ENCODE measurements at regions of chr9 and their contacts with region 1.

Region 1: DNA sequence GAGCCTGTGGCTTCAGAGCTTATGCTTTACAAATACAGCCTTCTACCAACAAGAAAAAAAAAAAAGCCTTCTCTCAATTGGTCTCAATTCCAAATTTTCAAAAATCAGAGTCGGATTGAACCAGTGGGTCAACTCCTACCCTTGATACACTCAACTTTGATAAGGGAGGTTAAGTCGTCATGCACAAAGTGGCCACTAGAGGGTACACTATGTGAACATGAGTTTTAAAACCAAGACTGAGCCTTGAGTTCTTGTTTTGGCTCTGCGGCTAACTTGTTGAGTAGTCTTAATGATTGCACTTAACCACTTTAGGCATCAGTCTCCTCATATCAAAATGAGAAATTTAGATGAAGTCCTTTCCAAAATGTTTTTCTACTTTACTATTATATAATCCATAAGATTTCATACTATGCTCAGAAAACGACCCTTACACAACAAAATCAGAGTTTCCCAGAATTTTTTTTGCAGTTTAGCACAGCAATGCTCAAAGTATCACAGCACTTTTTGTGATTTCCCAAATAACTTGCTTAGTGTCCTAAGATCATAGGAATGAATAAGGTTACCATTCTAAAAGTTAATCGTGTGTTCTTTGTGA is 92.9 kb upstream of the MTAP start:
- DNase-seq: peak; percentile 44 to 57 (median 50)
- H3K4me3 ChIP-seq: no peak overlapping the region
- H3K4me3 Mint-ChIP-seq: no peak overlapping the region
- H3K27ac ChIP-seq: no peak overlapping the region
- H3K27ac Mint-ChIP-seq: peak overlapping the region in 1 of 7 donors; percentile 43
- H3K4me1 ChIP-seq: no peaks in the 10 kb centered on the region
- H3K4me1 Mint-ChIP-seq: peaks cover 0 to 8% (median 5%) of the 10 kb centered on the region in 4 donors
- H3K27me3 ChIP-seq: peaks cover 4% of the 10 kb centered on the region
- H3K27me3 Mint-ChIP-seq: peaks cover 1 to 3% of the 10 kb centered on the region in 2 donors

Region 2: GRCh38 chr9:21326526-21327139 is 382.9 kb before region 1 on chr9:
- CTCF ChIA-PET with region 1: interaction called, 10 read pairs
- POLR2A ChIA-PET with region 1: no interaction called
- intact Hi-C with region 1: loop called (anchors 1 kb)
- DNase-seq: peak in 4 of 5 donors; percentile 57 to 66 (median 61)
- H3K4me3 ChIP-seq: no peak overlapping the region
- H3K4me3 Mint-ChIP-seq: peak overlapping the region in 4 of 8 donors; percentile 36 to 74 (median 44)
- H3K27ac ChIP-seq: no peak overlapping the region
- H3K27ac Mint-ChIP-seq: peak overlapping the region in 4 of 7 donors; percentile 24 to 74 (median 48)
- H3K4me1 ChIP-seq: peaks cover 49% of the 10 kb centered on the region
- H3K4me1 Mint-ChIP-seq: peaks cover 34 to 59% (median 52%) of the 10 kb centered on the region in 4 donors
- H3K27me3 ChIP-seq: no peaks in the 10 kb centered on the region
- H3K27me3 Mint-ChIP-seq: no peaks in the 10 kb centered on the region

Region 3: DNA sequence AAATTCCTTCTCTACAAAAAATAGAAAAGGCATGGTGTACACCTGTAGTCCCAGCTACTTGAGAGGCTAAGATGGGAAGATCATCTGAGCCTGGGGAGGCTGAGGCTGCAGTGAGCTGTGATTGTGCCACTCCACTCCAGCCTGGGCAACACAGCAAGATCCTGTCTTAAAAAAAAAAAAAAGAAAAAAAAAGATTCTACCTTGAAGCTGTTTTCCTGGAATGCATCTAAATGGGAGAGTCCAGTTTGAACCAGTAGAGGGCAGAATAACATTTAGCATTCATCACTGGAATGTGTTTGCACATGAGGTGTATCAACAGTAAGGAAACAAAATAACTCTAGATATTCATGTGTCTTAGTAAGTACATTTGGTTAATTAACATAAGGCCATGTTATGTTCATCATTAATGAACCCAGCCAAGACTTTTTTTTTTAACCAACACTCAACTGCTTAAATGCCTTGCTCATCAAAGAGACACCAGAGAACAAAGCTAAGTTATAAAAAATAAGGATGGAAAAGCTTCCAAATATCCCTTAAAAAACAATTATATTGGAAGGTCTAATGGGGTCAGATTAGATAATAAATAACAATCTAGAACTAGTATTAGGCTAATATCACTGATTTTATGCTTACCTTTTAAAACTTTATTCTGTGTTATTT is 243.6 kb before region 1 on chr9:
- CTCF ChIA-PET with region 1: interaction called, 44 read pairs
- POLR2A ChIA-PET with region 1: interaction called, 3 read pairs
- intact Hi-C with region 1: loop called (anchors 1 kb)
- DNase-seq: peak; percentile 43 to 57 (median 50)
- H3K4me3 ChIP-seq: no peak overlapping the region
- H3K4me3 Mint-ChIP-seq: no peak overlapping the region
- H3K27ac ChIP-seq: no peak overlapping the region
- H3K27ac Mint-ChIP-seq: no peak overlapping the region
- H3K4me1 ChIP-seq: no peaks in the 10 kb centered on the region
- H3K4me1 Mint-ChIP-seq: peaks cover 0 to 2% (median 0%) of the 10 kb centered on the region in 4 donors
- H3K27me3 ChIP-seq: no peaks in the 10 kb centered on the region
- H3K27me3 Mint-ChIP-seq: peaks cover 5 to 7% of the 10 kb centered on the region in 2 donors

Region 4: DNA sequence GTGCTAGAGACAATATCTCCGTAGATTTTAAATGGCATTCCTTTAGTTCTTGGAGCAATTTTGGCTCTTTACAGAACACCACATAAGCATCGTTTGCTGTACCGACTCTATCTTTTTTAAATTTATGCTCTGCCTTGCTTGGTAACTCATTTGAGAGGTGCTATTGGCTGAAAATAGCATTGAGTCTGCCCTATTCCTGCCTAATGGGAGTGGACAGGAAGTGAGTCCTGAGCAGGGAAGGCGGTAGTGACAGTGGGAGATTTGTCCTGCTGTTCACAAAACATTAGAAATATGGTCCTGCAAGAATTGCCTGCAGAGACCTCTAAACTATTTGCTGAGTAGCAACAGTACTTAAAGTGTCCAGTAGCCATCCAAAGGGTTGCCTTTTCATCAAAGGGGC is 112.3 kb before region 1 on chr9:
- CTCF ChIA-PET with region 1: no interaction called
- POLR2A ChIA-PET with region 1: no interaction called
- intact Hi-C with region 1: no loop called
- DNase-seq: no peak
- H3K4me3 ChIP-seq: no peak overlapping the region
- H3K4me3 Mint-ChIP-seq: no peak overlapping the region
- H3K27ac ChIP-seq: no peak overlapping the region
- H3K27ac Mint-ChIP-seq: no peak overlapping the region
- H3K4me1 ChIP-seq: no peaks in the 10 kb centered on the region
- H3K4me1 Mint-ChIP-seq: peaks cover 0 to 1% (median under 1%) of the 10 kb centered on the region in 4 donors
- H3K27me3 ChIP-seq: peaks cover 4% of the 10 kb centered on the region
- H3K27me3 Mint-ChIP-seq: peaks cover 4 to 10% of the 10 kb centered on the region in 2 donors

Region 5: GRCh38 chr9:21683484-21684175 is 25.9 kb before region 1 on chr9:
- CTCF ChIA-PET with region 1: no interaction called
- POLR2A ChIA-PET with region 1: no interaction called
- intact Hi-C with region 1: no loop called
- DNase-seq: no peak
- H3K4me3 ChIP-seq: no peak overlapping the region
- H3K4me3 Mint-ChIP-seq: no peak overlapping the region
- H3K27ac ChIP-seq: no peak overlapping the region
- H3K27ac Mint-ChIP-seq: no peak overlapping the region
- H3K4me1 ChIP-seq: peaks cover 5% of the 10 kb centered on the region
- H3K4me1 Mint-ChIP-seq: peaks cover 1 to 14% (median 6%) of the 10 kb centered on the region in 4 donors
- H3K27me3 ChIP-seq: no peaks in the 10 kb centered on the region
- H3K27me3 Mint-ChIP-seq: peaks cover 0 to 1% of the 10 kb centered on the region in 2 donors

Region 6: DNA sequence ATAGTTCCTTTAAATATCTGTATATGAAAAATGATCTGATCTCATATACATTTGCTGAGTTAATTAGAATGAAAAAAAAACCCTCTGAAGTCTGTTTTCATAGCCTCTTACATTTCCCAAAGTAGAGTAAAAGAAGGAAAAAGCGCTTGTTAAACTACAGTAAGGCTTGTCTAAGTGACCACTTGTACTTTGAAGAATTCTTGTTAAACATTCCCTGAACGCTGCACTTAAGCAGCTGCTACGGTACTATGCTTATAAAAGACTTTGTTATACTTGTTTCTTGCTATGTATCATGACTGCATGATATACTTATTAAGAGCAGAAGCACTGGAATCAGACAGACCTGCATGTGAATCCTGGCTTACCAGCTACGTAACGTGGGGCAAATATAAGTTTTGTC is 11.2 kb after region 1 on chr9:
- CTCF ChIA-PET with region 1: interaction called, 35 read pairs
- POLR2A ChIA-PET with region 1: no interaction called
- intact Hi-C with region 1: no loop called
- DNase-seq: no peak
- H3K4me3 ChIP-seq: no peak overlapping the region
- H3K4me3 Mint-ChIP-seq: no peak overlapping the region
- H3K27ac ChIP-seq: no peak overlapping the region
- H3K27ac Mint-ChIP-seq: no peak overlapping the region
- H3K4me1 ChIP-seq: no peaks in the 10 kb centered on the region
- H3K4me1 Mint-ChIP-seq: no peaks in the 10 kb centered on the region
- H3K27me3 ChIP-seq: no peaks in the 10 kb centered on the region
- H3K27me3 Mint-ChIP-seq: peaks cover 20 to 21% of the 10 kb centered on the region in 2 donors

Region 7: GRCh38 chr9:21777701-21778100 is 68.1 kb after region 1 on chr9:
- CTCF ChIA-PET with region 1: interaction called, 21 read pairs
- POLR2A ChIA-PET with region 1: interaction called, 7 read pairs
- intact Hi-C with region 1: no loop called
- DNase-seq: peak in 3 of 5 donors; percentile 7 to 18 (median 12)
- H3K4me3 ChIP-seq: peak overlapping the region in 1 of 2 donors; percentile 30
- H3K4me3 Mint-ChIP-seq: no peak overlapping the region
- H3K27ac ChIP-seq: no peak overlapping the region
- H3K27ac Mint-ChIP-seq: no peak overlapping the region
- H3K4me1 ChIP-seq: peaks cover 39% of the 10 kb centered on the region
- H3K4me1 Mint-ChIP-seq: peaks cover 0 to 4% (median 3%) of the 10 kb centered on the region in 4 donors
- H3K27me3 ChIP-seq: no peaks in the 10 kb centered on the region
- H3K27me3 Mint-ChIP-seq: no peaks in the 10 kb centered on the region

Measured in CD4-positive, alpha-beta memory T cell (primary cell).